ENCODE measurements at regions of chr2 and their contacts with region 1.

Region 1: GRCh38 chr2:236168110-236169067 is at the start of gene GBX2:
- DNase-seq: no peak
- H3K4me3 Mint-ChIP-seq: peak within 1 kb of the TSS; percentile 43
- H3K27ac Mint-ChIP-seq: peak within 1 kb of the TSS; percentile 77
- H3K4me1 Mint-ChIP-seq: peaks cover 3% of the 10 kb centered on the region
- H3K27me3 Mint-ChIP-seq: peaks cover 59% of the 10 kb centered on the region
- total RNA-seq, gene GBX2: not detected

Region 2: GRCh38 chr2:236180831-236181453 is 12.6 kb after region 1 on chr2:
- CTCF ChIA-PET with region 1: interaction called, 12 read pairs
- POLR2A ChIA-PET with region 1: no interaction called
- DNase-seq: peak; percentile 40
- H3K4me3 Mint-ChIP-seq: no peak overlapping the region
- H3K27ac Mint-ChIP-seq: no peak overlapping the region
- H3K4me1 Mint-ChIP-seq: peaks cover 2% of the 10 kb centered on the region
- H3K27me3 Mint-ChIP-seq: peaks cover 46% of the 10 kb centered on the region

Measured in activated CD4-positive, alpha-beta T cell treated with anti-CD3 and anti-CD28 coated beads, Interleukin-2, amount 10 ng/mL, durations not matched to agents 7 days and 5 days (primary cell).